ENCODE measurements at regions of chr6 and their contacts with region 1.

Region 1: GRCh38 chr6:56329271-56330050 is 82.1 kb upstream of the COL21A1 start:
- DNase-seq: no peak
- H3K4me3 ChIP-seq: no peak overlapping the region
- H3K27ac ChIP-seq: no peak overlapping the region
- H3K4me1 ChIP-seq: no peaks in the 10 kb centered on the region
- H3K27me3 ChIP-seq: no peaks in the 10 kb centered on the region
- CTCF ChIP-seq: no peak
- EP300 ChIP-seq: no peak
- POLR2A ChIP-seq: no peak
- RAD21 ChIP-seq: no peak

Region 2: DNA sequence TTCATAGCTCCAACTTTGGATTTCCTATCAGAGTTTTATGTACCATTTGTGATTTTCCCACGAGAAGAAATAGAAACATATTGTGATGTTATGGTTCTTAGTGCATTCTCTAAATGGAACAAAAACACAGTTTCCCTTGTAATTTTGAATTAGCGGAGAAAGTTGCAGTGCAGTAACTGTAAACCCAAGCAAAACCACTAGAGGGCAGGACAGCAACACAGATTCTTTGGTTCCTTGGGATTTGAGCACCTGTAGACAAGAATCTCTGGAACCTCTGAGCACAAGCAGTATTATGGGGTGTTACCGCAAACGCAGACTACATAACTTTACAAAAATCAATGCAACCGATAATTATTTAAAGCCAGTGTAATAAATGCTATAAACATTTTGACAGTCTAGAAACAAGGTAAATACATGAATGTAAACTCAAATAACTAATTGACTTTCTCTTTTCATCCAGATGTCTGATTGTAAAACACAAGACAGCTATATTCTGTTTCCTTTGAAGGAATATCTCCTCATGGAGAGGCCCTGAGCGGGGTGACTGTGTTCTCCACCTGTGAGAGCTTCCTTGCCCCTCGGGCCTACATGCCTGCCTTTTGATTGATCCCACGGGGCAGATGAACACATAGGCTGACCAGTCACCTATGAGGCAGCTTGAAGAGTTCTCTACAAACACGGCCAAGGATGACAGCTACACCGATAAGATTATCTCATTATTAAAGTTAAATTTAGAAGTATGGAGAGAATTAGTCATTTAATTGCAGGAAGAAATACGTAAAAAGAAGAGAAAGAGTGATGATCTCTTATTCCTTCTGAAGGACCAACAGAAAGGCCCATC is 14.6 kb before region 1 on chr6:
- CTCF ChIA-PET with region 1: interaction called, 11 read pairs
- POLR2A ChIA-PET with region 1: no interaction called
- DNase-seq: peak in 1 of 2 experiments; percentile 68
- H3K4me3 ChIP-seq: no peak overlapping the region
- H3K27ac ChIP-seq: no peak overlapping the region
- H3K4me1 ChIP-seq: no peaks in the 10 kb centered on the region
- H3K27me3 ChIP-seq: no peaks in the 10 kb centered on the region
- CTCF ChIP-seq: peak in 2 of 3 experiments; percentile 74 to 79; a peak in 3 of 4 replicates
- EP300 ChIP-seq: no peak
- POLR2A ChIP-seq: no peak
- RAD21 ChIP-seq: peak; percentile 80 to 86

Region 3: DNA sequence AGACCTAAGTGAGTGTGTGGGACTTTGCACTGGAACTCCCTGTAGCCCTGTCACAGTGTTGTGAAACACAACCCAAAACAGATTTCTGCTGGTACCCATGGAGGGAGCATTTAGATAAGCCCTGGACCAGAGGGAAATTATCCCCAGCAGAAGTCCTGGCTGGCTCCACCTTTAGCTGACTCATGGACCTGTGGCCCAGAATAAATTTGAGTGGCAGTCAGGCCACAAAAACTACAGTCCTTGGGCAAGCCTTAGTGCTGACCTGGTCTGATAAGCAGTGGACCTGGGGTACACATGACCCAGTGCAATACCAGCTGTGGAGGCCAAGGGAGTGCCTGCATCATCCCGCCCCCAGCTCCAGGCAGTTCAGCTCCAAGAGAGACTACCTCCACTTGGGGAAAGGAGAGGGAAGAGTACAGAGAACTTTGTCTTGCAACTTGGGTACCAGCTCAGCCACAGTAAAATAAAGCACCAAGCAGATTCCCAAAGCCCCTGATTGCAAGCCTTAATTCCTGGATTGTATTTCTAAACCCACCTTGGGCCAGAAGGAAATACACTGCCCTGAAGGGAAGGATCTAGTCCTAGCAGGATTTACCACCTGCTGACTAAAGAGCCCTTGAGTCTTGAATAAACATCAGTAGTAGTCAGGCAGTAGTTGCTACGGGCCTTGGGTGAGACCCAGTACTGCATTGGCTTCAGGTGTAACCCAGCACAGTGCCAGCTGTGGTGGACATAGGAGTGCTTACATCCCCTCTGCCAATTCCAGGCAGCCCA is 58.3 kb after region 1 on chr6:
- CTCF ChIA-PET with region 1: no interaction called
- POLR2A ChIA-PET with region 1: no interaction called
- DNase-seq: no peak
- H3K4me3 ChIP-seq: no peak overlapping the region
- H3K27ac ChIP-seq: no peak overlapping the region
- H3K4me1 ChIP-seq: no peaks in the 10 kb centered on the region; a peak in 1 of 7 replicates
- H3K27me3 ChIP-seq: no peaks in the 10 kb centered on the region
- CTCF ChIP-seq: no peak
- EP300 ChIP-seq: no peak
- POLR2A ChIP-seq: no peak
- RAD21 ChIP-seq: no peak